SK-N-SH (cell line): ENCODE measurements at regions of chr6 and their contacts with region 1.

Region 1: DNA sequence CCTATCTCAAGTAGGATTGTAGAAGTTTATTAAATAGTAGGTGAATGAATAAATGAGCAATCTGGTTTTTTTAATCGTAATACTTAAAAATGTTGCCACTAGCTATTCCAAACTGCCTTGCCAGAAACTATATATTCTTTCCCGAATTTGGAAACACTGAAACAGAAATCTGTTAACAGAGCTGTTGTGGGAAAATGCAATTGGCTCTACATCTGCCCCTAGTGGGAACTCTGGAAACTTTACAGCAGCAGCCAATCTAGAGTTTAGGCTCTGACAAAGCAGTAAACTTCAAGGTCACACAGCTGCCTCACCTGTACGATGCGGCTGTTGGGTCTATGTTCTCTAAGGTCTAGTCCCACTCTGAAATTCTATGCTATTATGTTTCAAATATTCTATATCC is 41.7 kb downstream of the SYNE1 start:
- DNase-seq: no peak
- H3K4me3 ChIP-seq: no peak overlapping the region; a peak in 1 of 4 replicates
- H3K27ac ChIP-seq: no peak overlapping the region
- H3K4me1 ChIP-seq: peaks cover 0 to 9% of the 10 kb centered on the region in 2 experiments; a peak in 2 of 4 replicates
- H3K27me3 ChIP-seq: no peaks in the 10 kb centered on the region
- CTCF ChIP-seq: peak; percentile 50
- EP300 ChIP-seq: no peak
- RAD21 ChIP-seq: peak; percentile 24; the same call in 1 of the 2 replicates

Region 2: DNA sequence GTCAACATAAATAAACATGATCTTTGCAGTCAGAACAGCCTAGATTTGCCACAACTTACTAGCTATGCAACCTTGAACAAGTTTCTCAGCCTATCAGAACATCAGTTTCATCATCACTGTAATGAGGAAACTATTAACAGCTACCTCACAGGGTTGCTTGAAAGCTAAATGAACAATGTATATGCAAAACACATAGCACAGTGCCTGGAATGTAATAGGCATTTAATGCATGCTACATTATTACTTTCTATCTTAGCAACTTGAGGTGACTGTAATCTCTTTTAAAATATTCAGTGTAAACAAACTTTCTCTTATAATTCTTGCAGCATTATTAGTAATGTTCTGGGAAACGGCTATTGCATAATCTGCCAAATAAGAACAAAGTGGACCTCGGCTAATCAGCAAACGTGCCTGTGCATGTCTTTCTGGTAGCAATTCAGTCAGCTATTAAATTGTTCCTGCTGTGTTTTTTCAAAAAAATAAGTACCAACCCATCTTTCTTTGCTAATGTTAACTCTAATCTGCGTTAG is 19.8 kb before region 1 on chr6:
- CTCF ChIA-PET with region 1: interaction called, 13 read pairs
- POLR2A ChIA-PET with region 1: no interaction called
- DNase-seq: no peak
- H3K4me3 ChIP-seq: no peak overlapping the region
- H3K27ac ChIP-seq: peak overlapping the region in 1 of 2 experiments; percentile 43; a peak in 1 of 4 replicates
- H3K4me1 ChIP-seq: peaks cover 0 to 16% of the 10 kb centered on the region in 2 experiments; a peak in 2 of 4 replicates
- H3K27me3 ChIP-seq: no peaks in the 10 kb centered on the region
- CTCF ChIP-seq: no peak
- EP300 ChIP-seq: no peak
- RAD21 ChIP-seq: no peak

Region 3: DNA sequence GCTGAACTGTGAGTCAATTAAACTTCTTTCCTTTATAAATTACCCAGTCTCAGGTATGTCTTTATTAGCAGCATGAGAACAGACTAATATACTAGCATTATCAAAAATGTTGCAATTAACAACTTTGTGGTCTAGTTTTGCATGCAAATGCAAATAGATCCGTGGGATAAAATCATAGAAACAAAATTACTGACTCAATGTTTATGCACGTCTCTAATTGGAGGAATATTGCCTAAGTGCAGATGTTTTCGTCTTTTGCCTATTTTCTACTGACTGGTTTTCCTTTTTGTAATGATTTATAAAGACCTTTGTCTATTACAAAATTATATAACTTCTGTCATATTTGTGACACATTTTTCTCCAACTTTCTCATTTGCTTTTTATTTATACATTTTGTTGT is 10.3 kb before region 1 on chr6:
- CTCF ChIA-PET with region 1: interaction called, 10 read pairs
- POLR2A ChIA-PET with region 1: no interaction called
- DNase-seq: no peak
- H3K4me3 ChIP-seq: no peak overlapping the region
- H3K27ac ChIP-seq: no peak overlapping the region
- H3K4me1 ChIP-seq: peaks cover 0 to 8% of the 10 kb centered on the region in 2 experiments; a peak in 1 of 4 replicates
- H3K27me3 ChIP-seq: no peaks in the 10 kb centered on the region
- CTCF ChIP-seq: no peak
- EP300 ChIP-seq: no peak
- RAD21 ChIP-seq: no peak